ENCODE measurements at regions of chr19 and their contacts with region 1.

Region 1: DNA sequence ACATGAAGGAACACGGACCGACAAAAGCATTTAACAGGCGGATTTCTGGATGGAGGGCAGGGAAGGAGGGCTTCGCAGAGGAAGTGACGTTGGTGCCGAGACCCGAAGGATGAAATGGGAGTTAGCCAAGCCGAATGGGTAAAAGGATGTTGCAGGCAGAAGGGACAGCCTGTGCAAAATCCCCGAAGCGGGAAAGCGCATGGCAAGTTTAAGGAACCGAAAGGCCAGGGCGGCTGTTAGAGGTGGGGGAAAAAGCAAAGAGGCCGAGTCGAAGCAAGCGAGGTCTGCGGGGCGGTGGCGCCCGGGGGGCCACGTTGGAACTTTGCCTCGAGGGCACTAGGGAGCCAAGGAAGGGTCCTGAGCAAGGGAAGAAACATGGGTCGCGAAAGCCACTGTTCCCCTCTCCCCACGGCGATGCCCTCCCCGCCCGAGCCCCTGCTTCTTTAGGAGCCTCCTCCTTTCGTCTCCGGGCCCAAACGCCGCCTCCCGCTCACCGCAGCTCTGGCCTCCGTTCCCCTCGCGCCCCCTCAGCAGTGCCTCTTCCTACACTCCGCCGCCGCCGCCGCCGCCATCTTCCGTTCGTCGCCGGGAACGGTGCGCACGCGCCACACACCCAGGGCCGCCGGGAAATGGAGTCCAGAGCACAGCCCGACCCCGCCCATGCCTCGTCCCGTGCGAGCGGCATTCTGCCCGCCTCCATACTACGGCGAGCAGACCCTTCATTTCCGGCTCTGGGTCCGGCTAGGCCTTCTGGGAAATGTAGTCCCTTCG is at the start of gene SYMPK:
- DNase-seq: peak; percentile 100
- ATAC-seq: peak; percentile 96
- H3K4me3 Mint-ChIP-seq: peak within 1 kb of the TSS; percentile 87
- H3K27ac Mint-ChIP-seq: peak within 1 kb of the TSS; percentile 95
- H3K4me1 Mint-ChIP-seq: peaks cover 31% of the 10 kb centered on the region
- H3K27me3 Mint-ChIP-seq: peaks cover 17% of the 10 kb centered on the region
- total RNA-seq, gene SYMPK: 108 to 128 TPM

Region 2: DNA sequence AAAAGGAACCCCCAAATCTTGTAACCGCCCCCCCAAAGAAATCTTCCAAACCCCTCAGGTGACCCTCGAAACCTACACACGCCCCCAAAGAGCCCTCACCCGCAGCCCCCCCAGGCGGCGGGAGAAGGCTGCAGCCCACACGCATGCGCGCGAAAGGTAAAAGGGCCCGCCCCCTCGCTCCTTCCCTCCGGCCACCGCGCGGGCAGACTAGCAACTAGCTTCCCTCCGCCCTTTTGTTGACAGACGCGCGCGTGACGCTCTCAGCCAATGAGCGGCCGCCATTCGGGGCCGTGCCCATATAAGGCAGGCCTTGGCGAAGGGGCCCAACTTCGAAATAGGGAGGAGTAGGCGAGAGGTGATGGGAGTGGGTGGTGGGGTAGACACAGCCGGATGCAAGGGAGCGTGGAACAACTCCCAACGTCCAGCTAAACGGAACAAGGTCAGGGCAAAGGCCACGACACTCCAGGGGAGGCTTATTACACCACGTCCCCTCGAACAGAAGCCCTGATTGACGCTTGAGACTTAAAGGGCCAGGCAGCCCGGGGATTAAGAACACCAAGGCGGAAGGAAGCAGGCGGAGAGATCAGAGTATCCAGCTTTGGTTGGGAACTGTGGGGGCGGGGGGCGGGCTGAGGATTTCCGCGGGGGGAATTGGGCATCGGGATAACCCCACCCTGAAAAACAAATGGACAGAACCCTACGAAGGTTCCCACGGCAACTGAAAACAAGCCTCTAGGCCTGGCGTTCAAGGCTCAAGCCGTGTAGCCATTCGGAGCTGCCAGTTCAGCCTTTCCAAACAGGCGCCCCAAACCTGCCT is 145.4 kb before region 1 on chr19:
- CTCF ChIA-PET with region 1: interaction called, 3 read pairs
- POLR2A ChIA-PET with region 1: no interaction called
- intact Hi-C with region 1: loop called in 1 of 2 experiments (anchors 1 kb)
- DNase-seq: peak; percentile 99
- ATAC-seq: peak; percentile 97
- H3K4me3 Mint-ChIP-seq: peak overlapping the region; percentile 93
- H3K27ac Mint-ChIP-seq: peak overlapping the region; percentile 94
- H3K4me1 Mint-ChIP-seq: peaks cover 40% of the 10 kb centered on the region
- H3K27me3 Mint-ChIP-seq: no peaks in the 10 kb centered on the region

Region 3: GRCh38 chr19:45798995-45799517 is 63.7 kb before region 1 on chr19:
- CTCF ChIA-PET with region 1: interaction called, 11 read pairs
- POLR2A ChIA-PET with region 1: no interaction called
- intact Hi-C with region 1: loop called in 1 of 2 experiments (anchors 5 kb)
- DNase-seq: peak; percentile 76
- ATAC-seq: peak; percentile 92
- H3K4me3 Mint-ChIP-seq: no peak overlapping the region
- H3K27ac Mint-ChIP-seq: no peak overlapping the region
- H3K4me1 Mint-ChIP-seq: peaks cover 5% of the 10 kb centered on the region
- H3K27me3 Mint-ChIP-seq: peaks cover 26% of the 10 kb centered on the region

Region 4: DNA sequence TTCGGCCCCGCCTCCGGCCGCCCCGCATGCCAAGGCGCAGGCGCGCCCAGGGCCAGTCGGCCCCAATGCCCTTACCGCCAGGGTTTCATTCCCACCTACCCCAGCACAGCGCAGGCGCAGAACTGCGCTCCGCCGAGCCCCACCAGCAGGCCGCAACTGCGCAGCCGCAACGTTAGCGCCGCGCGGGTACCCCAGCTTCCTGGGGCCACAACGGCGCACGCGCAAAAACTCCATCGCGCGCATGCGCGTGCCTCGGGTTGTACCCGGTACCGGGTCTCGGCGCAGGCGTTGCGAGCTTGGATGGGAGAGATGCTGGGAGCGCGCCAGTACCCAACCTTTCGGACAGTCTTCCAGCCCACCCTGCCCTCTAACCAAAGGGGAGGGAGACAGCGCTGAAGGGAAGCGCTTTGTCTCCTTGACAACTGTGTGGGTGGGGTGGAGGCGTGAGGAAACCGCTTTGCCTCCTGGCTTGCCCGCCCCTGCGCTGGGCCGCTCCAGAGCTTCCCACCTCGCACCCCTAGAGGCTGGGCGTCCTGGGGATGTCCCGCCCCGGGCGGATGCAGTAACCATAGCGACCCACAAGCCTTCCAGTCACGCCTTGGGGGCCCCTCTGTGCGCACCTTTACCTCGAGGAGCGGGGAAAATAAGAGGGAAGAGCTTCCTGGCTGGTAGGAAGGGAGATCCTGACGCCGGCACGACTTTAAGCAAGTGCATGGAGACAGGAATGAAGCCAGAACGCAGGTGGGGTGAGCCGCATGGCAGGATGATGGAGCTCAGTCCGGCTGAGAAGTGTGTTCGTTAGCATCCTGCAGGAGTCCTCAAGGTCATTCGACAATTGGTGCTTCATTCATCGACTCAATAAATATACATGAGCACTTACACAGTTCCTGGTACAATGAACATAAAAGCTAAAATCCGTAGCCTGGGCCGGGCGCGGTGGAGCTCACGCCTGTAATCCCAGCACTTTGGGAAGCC is 40.2 kb after region 1 on chr19:
- CTCF ChIA-PET with region 1: interaction called, 18 read pairs
- POLR2A ChIA-PET with region 1: interaction called, 5 read pairs
- intact Hi-C with region 1: loop called (anchors 1 kb)
- DNase-seq: peak; percentile 100
- ATAC-seq: peak; percentile 88
- H3K4me3 Mint-ChIP-seq: peak overlapping the region; percentile 88
- H3K27ac Mint-ChIP-seq: peak overlapping the region; percentile 75
- H3K4me1 Mint-ChIP-seq: peaks cover 16% of the 10 kb centered on the region
- H3K27me3 Mint-ChIP-seq: no peaks in the 10 kb centered on the region

Region 5: GRCh38 chr19:46265217-46265828 is 402.6 kb after region 1 on chr19:
- CTCF ChIA-PET with region 1: no interaction called
- POLR2A ChIA-PET with region 1: no interaction called
- intact Hi-C with region 1: loop called in 1 of 2 experiments (anchors 5 kb)
- DNase-seq: peak; percentile 82
- ATAC-seq: peak; percentile 75
- H3K4me3 Mint-ChIP-seq: no peak overlapping the region
- H3K27ac Mint-ChIP-seq: no peak overlapping the region
- H3K4me1 Mint-ChIP-seq: peaks cover 11% of the 10 kb centered on the region
- H3K27me3 Mint-ChIP-seq: peaks cover 46% of the 10 kb centered on the region

Measured in activated CD4-positive, alpha-beta T cell treated with anti-CD3 and anti-CD28 coated beads for 36 hours (primary cell).